Mammary epithelial cell (primary cell): ENCODE measurements at regions of chr15 and their contacts with region 1.

Region 1: DNA sequence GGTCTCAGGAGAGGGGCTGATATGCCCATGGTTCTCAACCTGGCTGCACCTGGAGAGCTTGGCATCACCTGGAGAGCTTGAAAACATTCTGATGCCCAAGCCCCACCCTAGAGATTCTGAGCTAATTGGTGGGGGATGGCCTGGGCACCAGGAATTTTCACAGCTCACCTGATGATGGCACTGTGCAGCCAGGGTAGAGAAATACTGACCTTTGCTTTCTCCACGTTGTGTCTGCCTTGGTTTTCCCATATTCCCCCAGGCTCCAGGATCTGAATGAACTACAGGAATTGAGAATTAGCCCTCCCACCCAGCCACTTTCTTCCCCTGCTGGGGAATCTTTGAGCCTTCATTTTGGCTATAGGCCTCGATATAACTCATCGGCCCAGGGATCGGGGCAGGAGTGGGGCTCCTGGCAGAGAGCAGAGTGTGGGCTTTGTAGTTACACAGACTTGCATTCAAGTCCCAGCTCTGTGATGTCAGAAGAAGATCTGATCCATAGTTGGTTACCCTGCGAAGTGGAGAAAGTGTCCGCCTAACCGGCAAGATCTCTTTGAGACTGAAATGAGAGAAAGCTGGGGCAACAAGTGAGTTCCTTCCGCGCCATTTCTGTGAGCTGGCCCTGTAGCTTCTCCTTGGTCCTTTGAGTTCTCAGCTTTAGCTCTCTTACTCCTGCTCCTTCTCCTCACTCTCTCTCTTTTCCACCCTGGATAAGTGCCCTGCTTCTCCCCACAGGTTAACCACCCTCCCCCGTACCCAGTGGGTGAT is 33.1 kb upstream of the UBE2Q2 start:
- DNase-seq: peak; percentile 60
- H3K4me3 ChIP-seq: no peak overlapping the region
- H3K27ac ChIP-seq: no peak overlapping the region
- H3K4me1 ChIP-seq: peaks cover 12% of the 10 kb centered on the region
- H3K27me3 ChIP-seq: no peaks in the 10 kb centered on the region
- CTCF ChIP-seq: peak; percentile 65 to 84

Region 2: GRCh38 chr15:75712668-75713337 is 97.4 kb before region 1 on chr15 and contains the start of gene CSPG4:
- CTCF ChIA-PET with region 1: no interaction called
- dilution Hi-C with region 1: loop called (anchors 5 kb)
- in situ Hi-C with region 1: no loop called
- intact Hi-C with region 1: no loop called
- DNase-seq: no peak
- H3K4me3 ChIP-seq: peak within 1 kb of the TSS; percentile 54 to 64 (median 56)
- H3K27ac ChIP-seq: no peak within 1 kb of the TSS
- H3K4me1 ChIP-seq: peaks cover 15% of the 10 kb centered on the region
- H3K27me3 ChIP-seq: no peaks in the 10 kb centered on the region
- CTCF ChIP-seq: no peak
- total RNA-seq, gene CSPG4: 3.6 to 28.5 TPM

Region 3: GRCh38 chr15:75903331-75904239 is 93.4 kb after region 1 on chr15 and contains the start of gene FBXO22:
- CTCF ChIA-PET with region 1: no interaction called
- dilution Hi-C with region 1: no loop called
- in situ Hi-C with region 1: no loop called
- intact Hi-C with region 1: loop called (anchors 1 kb)
- DNase-seq: peak; percentile 94
- H3K4me3 ChIP-seq: peak within 1 kb of the TSS; percentile 79 to 99 (median 94)
- H3K27ac ChIP-seq: peak within 1 kb of the TSS; percentile 80
- H3K4me1 ChIP-seq: peaks cover 21% of the 10 kb centered on the region
- H3K27me3 ChIP-seq: no peaks in the 10 kb centered on the region
- CTCF ChIP-seq: no peak
- total RNA-seq, gene FBXO22: 64.5 to 76.2 TPM

Region 4: GRCh38 chr15:75947092-75947491 is 136.9 kb after region 1 on chr15:
- CTCF ChIA-PET with region 1: interaction called, 4 read pairs
- dilution Hi-C with region 1: no loop called
- in situ Hi-C with region 1: no loop called
- intact Hi-C with region 1: loop called (anchors 5 kb)
- DNase-seq: peak; percentile 94
- H3K4me3 ChIP-seq: no peak overlapping the region
- H3K27ac ChIP-seq: peak overlapping the region; percentile 79
- H3K4me1 ChIP-seq: peaks cover 31% of the 10 kb centered on the region
- H3K27me3 ChIP-seq: no peaks in the 10 kb centered on the region
- CTCF ChIP-seq: no peak

Region 5: DNA sequence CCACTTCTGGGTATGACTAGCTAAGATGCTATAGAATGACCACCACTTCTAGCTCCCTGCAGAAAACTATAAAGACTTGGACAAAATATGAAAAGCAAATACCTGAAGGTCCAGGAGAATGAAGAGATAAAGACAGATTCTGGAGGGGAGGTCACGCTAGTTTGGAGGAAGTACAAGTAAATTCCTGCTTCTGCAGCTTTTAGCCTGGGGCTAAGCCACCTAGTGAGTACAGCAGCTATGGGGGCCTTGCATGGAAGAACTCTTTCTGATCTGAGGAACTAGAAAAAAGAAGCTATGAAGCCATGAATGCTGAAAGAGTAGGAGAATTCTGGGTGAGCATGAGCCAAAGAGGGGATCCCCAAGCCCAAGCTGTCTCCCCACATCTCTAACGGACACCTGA is 172.3 kb after region 1 on chr15:
- CTCF ChIA-PET with region 1: no interaction called
- dilution Hi-C with region 1: no loop called
- in situ Hi-C with region 1: no loop called
- intact Hi-C with region 1: no loop called
- DNase-seq: no peak
- H3K4me3 ChIP-seq: no peak overlapping the region
- H3K27ac ChIP-seq: no peak overlapping the region
- H3K4me1 ChIP-seq: no peaks in the 10 kb centered on the region
- H3K27me3 ChIP-seq: no peaks in the 10 kb centered on the region
- CTCF ChIP-seq: no peak

Region 6: DNA sequence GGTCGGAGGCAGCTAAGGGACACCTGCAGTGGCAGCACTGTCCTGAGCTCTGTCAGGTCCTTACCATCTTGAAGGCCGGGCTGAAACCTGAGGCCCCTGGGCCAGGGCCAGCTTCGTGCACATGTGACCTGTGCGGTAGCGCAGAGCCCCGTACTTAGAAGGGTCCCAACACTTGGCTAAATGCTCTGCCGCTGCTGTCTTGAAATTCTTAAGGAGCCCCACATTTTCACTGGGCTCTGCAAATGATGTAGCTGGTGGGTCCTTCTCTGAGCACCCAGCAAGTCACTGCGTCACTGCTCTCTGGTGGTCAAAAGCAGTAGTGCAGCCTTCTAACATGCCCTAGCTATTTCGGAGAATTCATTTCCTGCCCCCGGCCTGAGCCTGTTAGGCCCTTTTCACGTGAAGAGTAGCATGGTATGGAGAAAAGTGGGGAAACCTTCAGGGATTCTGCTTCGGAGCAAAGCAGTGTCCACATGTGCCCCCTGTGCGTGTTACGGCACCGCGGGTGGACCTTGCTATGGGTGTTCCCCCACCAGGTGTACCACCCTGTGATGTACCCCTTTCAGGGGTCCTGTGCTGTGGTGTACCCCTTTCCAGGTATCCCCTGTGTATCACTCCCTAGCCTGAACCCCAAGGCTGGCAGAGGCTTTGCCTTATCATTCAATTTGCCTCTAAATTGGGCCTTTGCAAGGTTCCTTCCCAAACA is 329.4 kb after region 1 on chr15:
- CTCF ChIA-PET with region 1: interaction called, 29 read pairs
- dilution Hi-C with region 1: no loop called
- in situ Hi-C with region 1: loop called (anchors 10 kb)
- intact Hi-C with region 1: loop called (anchors 1 kb)
- DNase-seq: peak; percentile 55
- H3K4me3 ChIP-seq: no peak overlapping the region
- H3K27ac ChIP-seq: no peak overlapping the region
- H3K4me1 ChIP-seq: peaks cover 14% of the 10 kb centered on the region
- H3K27me3 ChIP-seq: no peaks in the 10 kb centered on the region
- CTCF ChIP-seq: peak; percentile 96 to 98